MCF 10A (cell line): ENCODE measurements at regions of chr1 and their contacts with region 1.

Region 1: DNA sequence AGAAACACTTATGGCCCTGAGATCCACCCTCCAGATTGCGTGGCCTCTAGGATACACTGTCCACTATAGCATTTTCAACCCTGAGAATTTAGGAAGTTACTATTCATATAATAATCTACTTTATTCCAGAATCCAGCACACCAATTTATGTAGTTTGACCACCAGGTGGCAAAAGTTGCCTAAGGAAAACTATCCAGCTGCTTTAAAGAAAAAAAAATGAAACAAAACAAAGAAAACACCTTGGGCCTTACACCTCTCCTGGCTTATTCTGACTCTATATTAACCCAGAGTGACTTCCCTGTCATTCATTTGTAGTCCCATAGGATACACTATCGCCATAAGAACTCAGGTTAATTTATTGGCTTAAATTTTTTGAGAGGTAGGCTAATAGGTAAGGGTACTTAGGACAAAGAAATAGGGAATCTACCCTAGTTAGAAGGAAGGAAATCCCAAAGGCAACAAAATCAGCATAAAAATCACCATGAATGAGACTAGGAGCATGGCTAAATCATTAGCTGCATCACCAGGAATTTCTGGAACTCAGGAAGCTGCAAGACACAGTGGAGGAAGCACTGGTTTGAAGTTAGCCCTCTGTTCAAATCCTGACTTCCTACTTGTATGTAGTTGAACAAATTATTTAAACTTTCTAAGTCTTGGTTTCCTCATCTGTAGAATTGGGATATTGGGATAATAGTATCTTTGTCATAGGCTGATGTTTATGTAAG is 107.5 kb downstream of the SPAG17 start:
- DNase-seq: peak; percentile 63
- H3K4me3 Mint-ChIP-seq: no peak overlapping the region
- H3K27ac Mint-ChIP-seq: no peak overlapping the region
- H3K4me1 Mint-ChIP-seq: no peaks in the 10 kb centered on the region
- H3K27me3 Mint-ChIP-seq: no peaks in the 10 kb centered on the region
- CTCF ChIP-seq: peak; percentile 65

Region 2: GRCh38 chr1:118122249-118123004 is 44.9 kb after region 1 on chr1:
- CTCF ChIA-PET with region 1: interaction called, 11 read pairs
- POLR2A ChIA-PET with region 1: interaction called, 3 read pairs
- intact Hi-C with region 1: no loop called
- DNase-seq: peak; percentile 61
- H3K4me3 Mint-ChIP-seq: no peak overlapping the region
- H3K27ac Mint-ChIP-seq: no peak overlapping the region
- H3K4me1 Mint-ChIP-seq: peaks cover 30% of the 10 kb centered on the region
- H3K27me3 Mint-ChIP-seq: no peaks in the 10 kb centered on the region
- CTCF ChIP-seq: no peak

Region 3: DNA sequence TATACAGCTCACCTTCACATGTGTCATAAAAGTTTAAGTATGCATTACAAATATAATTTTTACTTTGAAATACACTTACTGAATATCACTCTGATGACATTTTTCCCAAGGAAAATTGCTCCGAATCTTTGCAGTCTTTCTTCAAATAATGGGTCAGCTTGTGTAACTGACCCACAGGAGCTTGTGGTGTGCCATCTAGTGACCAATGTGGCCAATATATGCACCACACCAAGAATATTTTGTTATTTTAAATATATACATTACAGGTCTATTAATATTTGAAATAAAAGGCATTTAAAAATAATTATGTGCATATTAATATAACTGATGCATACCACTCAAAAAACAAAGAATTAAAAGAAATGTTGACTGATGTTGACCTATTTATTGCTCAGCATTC is 639.3 kb after region 1 on chr1:
- CTCF ChIA-PET with region 1: no interaction called
- POLR2A ChIA-PET with region 1: no interaction called
- intact Hi-C with region 1: loop called (anchors 2 kb)
- DNase-seq: peak; percentile 10
- H3K4me3 Mint-ChIP-seq: no peak overlapping the region
- H3K27ac Mint-ChIP-seq: no peak overlapping the region
- H3K4me1 Mint-ChIP-seq: no peaks in the 10 kb centered on the region
- H3K27me3 Mint-ChIP-seq: no peaks in the 10 kb centered on the region
- CTCF ChIP-seq: no peak

Region 4: DNA sequence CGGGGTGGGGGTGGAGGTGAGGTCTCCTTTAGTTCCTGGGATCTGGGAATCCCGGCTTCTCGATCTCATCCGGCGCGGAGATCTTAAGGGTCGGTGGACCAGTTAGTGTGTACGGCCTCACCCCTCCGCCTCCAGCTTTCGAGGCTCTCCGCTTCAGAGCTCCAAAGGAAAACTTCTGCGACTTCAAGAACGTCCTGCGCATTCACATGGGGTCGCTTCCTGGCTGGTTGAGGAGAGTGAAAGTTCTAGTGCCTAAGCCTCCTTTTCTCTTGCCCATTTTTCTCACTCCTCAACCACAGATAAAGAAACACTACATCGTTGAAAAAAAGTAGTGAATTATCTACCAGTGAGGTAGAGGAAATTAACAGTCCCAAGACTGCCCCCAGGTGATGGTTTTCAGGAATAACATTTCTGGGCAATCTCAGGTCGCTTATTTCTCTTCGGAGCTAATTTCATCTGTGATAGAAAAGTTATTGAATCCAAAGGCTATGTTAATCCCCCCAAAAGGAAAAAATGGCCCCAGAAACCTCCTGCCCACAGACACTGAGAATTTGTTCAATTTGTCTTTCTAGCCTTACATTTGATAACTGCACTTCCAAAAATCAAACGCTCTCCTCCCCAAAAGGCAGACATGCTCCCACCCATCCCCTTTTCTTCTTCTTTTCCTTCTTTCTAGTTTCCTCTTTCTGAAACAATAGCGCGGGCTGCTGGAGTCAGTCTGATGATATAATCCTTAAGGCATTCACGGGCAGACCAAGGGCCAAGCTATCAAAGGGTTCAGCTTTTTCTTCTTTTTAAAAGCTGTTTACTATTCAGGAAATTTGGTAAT is 931.2 kb after region 1 on chr1:
- CTCF ChIA-PET with region 1: interaction called, 9 read pairs
- POLR2A ChIA-PET with region 1: interaction called, 3 read pairs
- intact Hi-C with region 1: loop called (anchors 2 kb)
- DNase-seq: peak; percentile 52
- H3K4me3 Mint-ChIP-seq: no peak overlapping the region
- H3K27ac Mint-ChIP-seq: peak overlapping the region; percentile 24
- H3K4me1 Mint-ChIP-seq: peaks cover 20% of the 10 kb centered on the region
- H3K27me3 Mint-ChIP-seq: no peaks in the 10 kb centered on the region
- CTCF ChIP-seq: peak; percentile 59

Region 5: GRCh38 chr1:119367427-119368124 is 1290.1 kb after region 1 on chr1:
- CTCF ChIA-PET with region 1: interaction called, 9 read pairs
- POLR2A ChIA-PET with region 1: no interaction called
- intact Hi-C with region 1: loop called (anchors 1 kb)
- DNase-seq: peak; percentile 60
- H3K4me3 Mint-ChIP-seq: no peak overlapping the region
- H3K27ac Mint-ChIP-seq: no peak overlapping the region
- H3K4me1 Mint-ChIP-seq: peaks cover 14% of the 10 kb centered on the region
- H3K27me3 Mint-ChIP-seq: no peaks in the 10 kb centered on the region
- CTCF ChIP-seq: peak; percentile 94